ENCODE measurements at regions of chr21 and their contacts with region 1.

Region 1: DNA sequence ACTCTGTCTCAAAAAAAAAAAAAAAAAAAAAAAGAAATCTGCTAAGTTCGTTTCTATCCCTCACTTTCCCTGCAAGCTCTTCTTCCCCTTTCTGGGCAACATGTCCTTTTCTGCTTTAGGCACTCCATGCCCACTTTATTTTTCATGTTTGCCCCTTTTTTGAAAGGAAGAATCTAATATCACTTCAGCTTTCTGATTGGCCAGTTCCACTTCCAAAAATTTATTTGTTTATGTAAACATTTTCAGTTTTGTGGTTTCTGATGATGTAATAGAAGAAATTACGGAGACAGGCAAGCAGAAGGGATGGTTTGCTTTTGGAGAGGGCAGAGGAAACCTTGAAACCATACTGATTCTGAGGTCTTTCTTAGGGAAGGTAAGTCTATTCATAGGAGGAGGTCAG is 15.1 kb downstream of the IFNAR1 start:
- DNase-seq: no peak
- ATAC-seq: no peak
- H3K4me3 Mint-ChIP-seq: peak overlapping the region; percentile 46
- H3K27ac Mint-ChIP-seq: peak overlapping the region; percentile 83
- H3K4me1 Mint-ChIP-seq: peaks cover 43% of the 10 kb centered on the region
- H3K27me3 Mint-ChIP-seq: no peaks in the 10 kb centered on the region
- CTCF ChIP-seq: no peak

Region 2: DNA sequence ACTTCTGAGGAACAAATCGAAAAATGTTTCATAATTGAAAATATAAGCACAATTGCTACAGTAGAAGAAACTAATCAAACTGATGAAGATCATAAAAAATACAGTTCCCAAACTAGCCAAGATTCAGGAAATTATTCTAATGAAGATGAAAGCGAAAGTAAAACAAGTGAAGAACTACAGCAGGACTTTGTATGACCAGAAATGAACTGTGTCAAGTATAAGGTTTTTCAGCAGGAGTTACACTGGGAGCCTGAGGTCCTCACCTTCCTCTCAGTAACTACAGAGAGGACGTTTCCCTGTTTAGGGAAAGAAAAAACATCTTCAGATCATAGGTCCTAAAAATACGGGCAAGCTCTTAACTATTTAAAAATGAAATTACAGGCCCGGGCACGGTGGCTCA is 15.4 kb after region 1 on chr21:
- CTCF ChIA-PET with region 1: interaction called, 18 read pairs
- POLR2A ChIA-PET with region 1: interaction called, 4 read pairs
- intact Hi-C with region 1: loop called (anchors 2 kb)
- DNase-seq: no peak
- ATAC-seq: no peak
- H3K4me3 Mint-ChIP-seq: no peak overlapping the region
- H3K27ac Mint-ChIP-seq: peak overlapping the region; percentile 25
- H3K4me1 Mint-ChIP-seq: peaks cover 17% of the 10 kb centered on the region
- H3K27me3 Mint-ChIP-seq: no peaks in the 10 kb centered on the region
- CTCF ChIP-seq: no peak